Kidney (tissue), 22 donors: ENCODE measurements at regions of chr14 and their contacts with region 1.

Region 1: GRCh38 chr14:32259368-32260013 is 56.4 kb upstream of the RNU6-8 start:
- DNase-seq: peak in 2 of 5 donors; percentile 6 to 9
- H3K4me3 ChIP-seq: no peak overlapping the region
- H3K27ac ChIP-seq: no peak overlapping the region
- H3K4me1 ChIP-seq: peaks cover 0 to 4% (median 2%) of the 10 kb centered on the region in 3 donors
- H3K27me3 ChIP-seq: no peaks in the 10 kb centered on the region
- CTCF ChIP-seq: no peak

Region 2: GRCh38 chr14:32469388-32470160 is 210.1 kb after region 1 on chr14:
- intact Hi-C with region 1: loop called (anchors 10 kb)
- DNase-seq: peak in 2 of 5 donors; percentile 42 to 60
- H3K4me3 ChIP-seq: no peak overlapping the region
- H3K27ac ChIP-seq: no peak overlapping the region
- H3K4me1 ChIP-seq: peaks cover 2 to 22% (median 13%) of the 10 kb centered on the region in 3 donors
- H3K27me3 ChIP-seq: no peaks in the 10 kb centered on the region
- CTCF ChIP-seq: peak; percentile 58